Activated T-helper 2 cell treated with anti-CD3 and anti-CD28 coated beads, Interferon-gamma antibody, Interleukin-2, Interleukin-4, amounts not matched to agents 10 μg/mL and 5 μg/mL and 100 μg/mL, durations not matched to agents 14 hours and 24 hours and 36 hours (primary cell): ENCODE measurements at regions of chr13 and their contacts with region 1.

Region 1: GRCh38 chr13:27362064-27362883 is 62.1 kb upstream of the GTF3A start:
- DNase-seq: peak; percentile 68
- H3K4me3 Mint-ChIP-seq: peak overlapping the region; percentile 30
- H3K27ac Mint-ChIP-seq: no peak overlapping the region
- H3K4me1 Mint-ChIP-seq: no peaks in the 10 kb centered on the region
- H3K27me3 Mint-ChIP-seq: peaks cover 25% of the 10 kb centered on the region

Region 2: DNA sequence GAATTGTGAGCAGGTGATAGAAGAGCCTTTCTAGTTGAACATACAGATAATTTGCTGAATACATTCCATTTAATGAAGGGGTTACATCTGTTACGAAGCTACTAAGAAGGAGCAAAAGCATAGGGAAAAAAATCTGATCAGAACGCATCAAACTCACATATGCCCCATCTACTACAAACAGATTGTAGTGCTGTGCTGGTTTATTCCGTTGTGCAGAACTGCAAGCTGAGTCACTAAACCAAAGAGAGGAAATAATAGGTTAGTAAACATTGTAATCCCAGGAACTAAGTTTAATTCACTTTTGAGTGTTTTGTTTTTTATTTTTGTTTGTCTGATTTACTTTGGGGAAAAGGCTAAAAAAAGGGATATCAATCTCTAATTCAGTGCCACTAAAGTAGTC is 972.1 kb before region 1 on chr13:
- intact Hi-C with region 1: no loop called
- DNase-seq: no peak
- H3K4me3 Mint-ChIP-seq: no peak overlapping the region
- H3K27ac Mint-ChIP-seq: no peak overlapping the region
- H3K4me1 Mint-ChIP-seq: peaks cover 10% of the 10 kb centered on the region
- H3K27me3 Mint-ChIP-seq: no peaks in the 10 kb centered on the region

Region 3: DNA sequence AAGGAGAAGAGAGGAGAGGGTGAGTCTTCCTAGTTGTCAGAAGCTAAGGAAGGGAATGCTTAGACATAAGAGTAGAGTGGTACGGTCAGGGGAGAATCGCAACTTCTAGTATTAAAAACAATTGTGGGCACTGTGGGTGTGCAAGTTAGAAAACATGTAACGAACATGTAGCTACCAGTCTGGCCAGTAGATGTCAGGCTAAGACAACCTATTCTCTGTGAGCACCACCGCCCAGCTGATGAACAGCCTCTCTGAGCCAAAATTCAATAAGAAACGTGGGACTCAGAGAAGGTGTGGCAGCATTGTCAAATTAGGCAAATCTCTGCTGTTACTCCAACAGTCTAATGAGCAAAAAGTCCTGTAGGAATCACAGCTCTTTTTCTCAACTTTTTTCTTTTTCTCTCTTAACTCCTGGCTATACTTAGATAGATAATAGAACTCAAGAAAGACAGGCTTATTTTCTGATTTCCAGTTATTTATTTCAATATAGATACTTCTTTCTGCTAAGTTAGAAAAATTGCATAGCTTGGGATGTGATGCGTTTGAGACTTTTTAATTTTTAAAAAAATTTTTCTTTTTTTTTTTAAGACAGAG is 376.9 kb before region 1 on chr13:
- intact Hi-C with region 1: loop called (anchors 1 kb)
- DNase-seq: peak; percentile 53
- H3K4me3 Mint-ChIP-seq: no peak overlapping the region
- H3K27ac Mint-ChIP-seq: no peak overlapping the region
- H3K4me1 Mint-ChIP-seq: peaks cover 9% of the 10 kb centered on the region
- H3K27me3 Mint-ChIP-seq: peaks cover 8% of the 10 kb centered on the region

Region 4: GRCh38 chr13:27270594-27271520 is 91.4 kb before region 1 on chr13 and contains the start of gene RASL11A:
- intact Hi-C with region 1: loop called (anchors 5 kb)
- DNase-seq: peak; percentile 60
- H3K4me3 Mint-ChIP-seq: peak within 1 kb of the TSS; percentile 88
- H3K27ac Mint-ChIP-seq: peak within 1 kb of the TSS; percentile 61
- H3K4me1 Mint-ChIP-seq: peaks cover 10% of the 10 kb centered on the region
- H3K27me3 Mint-ChIP-seq: peaks cover 44% of the 10 kb centered on the region
- total RNA-seq, gene RASL11A: 1.3 and 1.7 TPM in 2 replicates

Region 5: DNA sequence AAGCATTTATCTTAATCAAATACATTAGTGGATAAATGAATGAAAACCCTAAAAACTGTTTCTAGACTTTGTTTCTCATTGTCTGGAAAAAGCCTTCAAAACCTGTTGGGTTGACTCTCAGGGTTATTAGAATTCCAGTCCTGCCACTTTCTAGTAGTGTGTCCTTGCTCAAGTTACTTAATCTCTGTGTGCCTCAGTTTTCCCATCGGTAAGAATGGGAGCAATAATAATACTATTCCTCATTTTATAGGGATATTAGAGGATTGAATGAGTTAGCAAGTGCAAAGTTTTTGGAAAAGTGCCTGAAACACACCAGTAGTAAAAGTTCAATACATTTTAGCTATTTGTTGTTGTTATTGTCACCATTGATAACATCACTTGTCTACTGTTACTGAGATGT is 623.3 kb after region 1 on chr13:
- intact Hi-C with region 1: loop called (anchors 2 kb)
- DNase-seq: no peak
- H3K4me3 Mint-ChIP-seq: no peak overlapping the region
- H3K27ac Mint-ChIP-seq: no peak overlapping the region
- H3K4me1 Mint-ChIP-seq: no peaks in the 10 kb centered on the region
- H3K27me3 Mint-ChIP-seq: peaks cover 33% of the 10 kb centered on the region